A673 (cell line): ENCODE measurements at regions of chr7 and their contacts with region 1.

Region 1: DNA sequence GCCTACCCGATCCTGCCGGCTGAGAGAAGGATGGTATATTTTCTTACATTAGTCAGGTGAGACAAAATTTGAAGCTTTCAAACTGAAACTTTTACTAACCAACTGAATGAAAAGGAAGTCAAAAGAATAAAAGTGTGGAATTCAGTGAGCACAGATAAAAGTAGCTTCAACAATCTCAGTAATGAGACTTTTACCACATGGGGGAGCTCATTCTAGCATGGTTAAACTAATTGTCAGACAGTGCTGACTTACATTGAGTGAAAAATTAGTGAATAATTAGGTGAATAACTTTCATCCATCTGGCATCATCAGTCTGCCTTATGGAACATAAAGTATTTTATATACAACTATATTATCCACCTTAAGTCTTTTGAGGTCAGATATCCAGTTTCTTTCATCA is 8.4 kb downstream of the FAM237B start:
- DNase-seq: peak; percentile 26
- H3K4me3 ChIP-seq: no peak overlapping the region
- H3K27ac ChIP-seq: no peak overlapping the region
- H3K4me1 ChIP-seq: no peaks in the 10 kb centered on the region
- H3K27me3 ChIP-seq: no peaks in the 10 kb centered on the region
- CTCF ChIP-seq: peak; percentile 58

Region 2: DNA sequence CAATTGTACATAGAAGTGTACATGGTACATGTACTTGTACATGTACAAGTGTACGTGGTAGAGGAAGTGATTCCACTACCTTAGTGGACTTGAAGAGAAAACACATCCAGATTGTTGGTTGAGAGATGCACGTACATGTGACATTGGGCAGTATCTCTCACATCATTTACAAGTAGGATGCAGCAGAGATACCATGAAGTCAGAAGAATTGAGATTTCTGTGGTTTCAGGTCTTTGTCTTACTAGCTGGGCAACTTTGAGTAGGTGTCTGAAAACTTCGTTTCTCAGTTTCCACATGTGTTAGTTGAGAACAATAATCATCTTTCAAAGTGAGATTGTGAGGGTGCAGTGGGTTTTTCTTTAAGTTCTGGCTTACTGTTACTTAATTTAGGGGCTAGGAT is 112.0 kb after region 1 on chr7:
- CTCF ChIA-PET with region 1: interaction called, 9 read pairs
- POLR2A ChIA-PET with region 1: no interaction called
- intact Hi-C with region 1: loop called (anchors 2 kb)
- DNase-seq: no peak
- H3K4me3 ChIP-seq: no peak overlapping the region
- H3K27ac ChIP-seq: no peak overlapping the region
- H3K4me1 ChIP-seq: peaks cover 9% of the 10 kb centered on the region
- H3K27me3 ChIP-seq: no peaks in the 10 kb centered on the region
- CTCF ChIP-seq: no peak

Region 3: GRCh38 chr7:90579171-90579688 is 266.5 kb after region 1 on chr7:
- CTCF ChIA-PET with region 1: interaction called, 11 read pairs
- POLR2A ChIA-PET with region 1: no interaction called
- intact Hi-C with region 1: no loop called
- DNase-seq: no peak
- H3K4me3 ChIP-seq: no peak overlapping the region
- H3K27ac ChIP-seq: no peak overlapping the region
- H3K4me1 ChIP-seq: no peaks in the 10 kb centered on the region
- H3K27me3 ChIP-seq: no peaks in the 10 kb centered on the region
- CTCF ChIP-seq: no peak